ENCODE measurements at regions of chr5 and their contacts with region 1.

Region 1: DNA sequence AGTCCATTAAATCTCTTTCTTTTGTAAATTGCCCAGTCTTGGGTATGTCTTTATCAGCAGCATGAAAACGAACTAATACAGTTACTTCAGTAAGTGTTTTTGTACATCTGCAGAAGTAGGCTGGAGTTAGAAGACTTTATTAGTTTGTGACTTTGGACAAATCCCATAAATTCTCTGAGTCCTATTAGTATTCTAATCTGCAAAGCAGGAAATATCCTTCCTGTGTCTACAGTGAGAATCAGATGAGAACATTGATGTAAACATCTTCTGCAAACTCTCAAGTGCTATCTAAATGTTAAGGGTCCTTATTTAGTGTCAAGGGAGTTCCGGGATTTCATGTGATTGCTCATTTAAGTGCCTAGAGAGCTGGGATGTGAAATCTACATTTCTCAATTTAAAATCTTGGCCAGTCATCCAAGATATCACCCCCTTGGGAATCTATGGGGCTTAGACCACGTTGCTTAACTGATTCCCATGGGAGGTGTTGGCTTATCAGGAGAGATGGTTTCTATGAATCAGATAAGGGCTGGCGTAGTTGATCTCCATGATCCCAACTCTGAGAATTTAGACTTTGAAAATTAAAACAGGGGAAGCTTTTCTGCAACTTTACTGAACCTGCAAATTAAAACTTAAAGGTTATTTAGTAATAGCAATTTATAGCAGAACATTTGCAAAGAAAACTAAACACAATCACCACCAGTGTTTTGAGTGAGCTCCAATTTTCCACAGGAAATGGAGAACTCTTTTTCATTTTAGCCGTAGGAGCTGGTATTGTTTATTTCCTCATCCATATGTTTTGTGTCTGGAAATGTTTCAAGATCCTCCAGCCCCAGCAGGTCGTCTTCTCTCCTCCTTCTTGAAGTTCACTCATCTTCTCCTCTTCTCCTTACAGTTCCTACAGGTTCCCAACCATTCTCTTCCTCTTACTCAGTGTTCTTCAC is 241.6 kb upstream of the CD180 start:
- DNase-seq: no peak
- ATAC-seq: no peak
- H3K4me3 Mint-ChIP-seq: no peak overlapping the region
- H3K27ac Mint-ChIP-seq: no peak overlapping the region
- H3K4me1 Mint-ChIP-seq: peaks cover 7% of the 10 kb centered on the region
- H3K27me3 Mint-ChIP-seq: no peaks in the 10 kb centered on the region; the same call in 1 of the 2 replicates
- CTCF ChIP-seq: no peak

Region 2: GRCh38 chr5:66701244-66701643 is 736.9 kb before region 1 on chr5:
- CTCF ChIA-PET with region 1: no interaction called
- POLR2A ChIA-PET with region 1: no interaction called
- DNase-seq: no peak
- ATAC-seq: no peak
- H3K4me3 Mint-ChIP-seq: no peak overlapping the region
- H3K27ac Mint-ChIP-seq: no peak overlapping the region
- H3K4me1 Mint-ChIP-seq: peaks cover 10% of the 10 kb centered on the region
- H3K27me3 Mint-ChIP-seq: peaks cover 88% of the 10 kb centered on the region
- CTCF ChIP-seq: no peak

Region 3: DNA sequence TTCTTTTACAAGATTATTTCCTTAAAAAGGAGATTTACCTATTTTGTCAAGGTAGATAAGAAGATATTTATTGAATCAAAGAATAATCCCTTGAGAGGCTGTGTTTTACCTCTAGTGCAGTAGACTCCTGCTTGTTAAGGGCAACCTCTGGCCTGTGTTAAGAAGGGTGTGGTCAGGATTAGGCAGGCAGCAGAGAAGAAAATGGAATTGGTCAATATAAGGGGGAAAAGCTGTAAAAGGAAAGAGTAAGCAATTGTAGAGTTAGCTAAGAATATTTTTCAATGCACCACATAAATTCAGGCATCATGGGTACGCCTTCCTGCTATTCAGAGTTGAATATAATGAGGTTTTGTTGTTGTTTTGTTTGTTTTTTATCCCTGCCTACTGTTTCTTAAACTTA is 1888.2 kb after region 1 on chr5:
- CTCF ChIA-PET with region 1: no interaction called
- POLR2A ChIA-PET with region 1: interaction called, 13 read pairs
- DNase-seq: no peak
- ATAC-seq: no peak
- H3K4me3 Mint-ChIP-seq: no peak overlapping the region
- H3K27ac Mint-ChIP-seq: no peak overlapping the region
- H3K4me1 Mint-ChIP-seq: no peaks in the 10 kb centered on the region
- H3K27me3 Mint-ChIP-seq: no peaks in the 10 kb centered on the region
- CTCF ChIP-seq: no peak